T-cell (primary cell): ENCODE measurements at regions of chr12 and their contacts with region 1.

Region 1: DNA sequence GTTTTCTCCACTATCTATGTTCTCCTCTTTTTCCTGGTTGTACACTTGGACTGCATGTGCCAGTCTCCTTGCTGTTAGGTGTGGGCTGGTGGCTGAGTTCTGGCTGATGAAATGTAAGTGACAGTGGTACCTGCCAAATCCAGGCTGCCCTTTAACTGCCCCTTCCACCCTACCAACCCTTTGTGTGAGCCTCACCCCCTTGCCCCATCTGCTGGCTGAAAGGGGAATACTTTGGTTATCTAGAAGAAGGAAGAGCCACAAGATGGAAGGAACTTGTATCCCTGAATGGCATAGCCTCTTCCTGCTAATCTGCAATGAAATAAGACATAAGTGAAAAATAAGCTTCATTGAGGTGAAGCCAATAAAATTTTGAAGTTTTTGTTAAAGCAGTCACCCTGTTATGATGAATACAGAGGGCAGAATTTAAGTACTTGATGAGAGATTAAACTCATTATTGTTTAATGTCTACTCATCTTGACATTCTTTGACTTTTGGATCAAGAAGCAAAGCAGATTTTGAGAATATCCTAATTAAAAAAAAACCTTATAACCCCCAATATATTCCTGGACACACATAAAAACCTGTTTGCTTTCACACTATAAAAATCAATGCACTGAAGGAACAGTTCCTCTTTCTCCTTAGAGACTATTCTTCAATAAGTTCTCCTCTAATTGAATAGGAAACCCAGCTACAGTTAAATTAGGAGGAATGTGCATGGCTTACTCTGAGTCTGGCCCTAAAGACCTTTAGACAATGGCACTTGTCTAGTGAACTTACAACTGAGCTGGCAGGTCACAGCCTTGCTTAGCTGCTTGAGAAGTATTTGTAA is 262.6 kb upstream of the BTG1 start:
- DNase-seq: peak in 15 of 35 experiments; percentile 24 to 71 (median 34)
- ATAC-seq: no peak
- H3K4me3 ChIP-seq: no peak overlapping the region
- H3K4me3 Mint-ChIP-seq: peak overlapping the region in 1 of 3 donors; percentile 16
- H3K27ac ChIP-seq: no peak overlapping the region
- H3K27ac Mint-ChIP-seq: peak overlapping the region; percentile 24 to 72
- H3K4me1 ChIP-seq: peaks cover 17 to 27% of the 10 kb centered on the region in 2 experiments
- H3K4me1 Mint-ChIP-seq: peaks cover 64 to 69% (median 65%) of the 10 kb centered on the region in 3 donors
- H3K27me3 ChIP-seq: no peaks in the 10 kb centered on the region
- H3K27me3 Mint-ChIP-seq: no peaks in the 10 kb centered on the region

Region 2: DNA sequence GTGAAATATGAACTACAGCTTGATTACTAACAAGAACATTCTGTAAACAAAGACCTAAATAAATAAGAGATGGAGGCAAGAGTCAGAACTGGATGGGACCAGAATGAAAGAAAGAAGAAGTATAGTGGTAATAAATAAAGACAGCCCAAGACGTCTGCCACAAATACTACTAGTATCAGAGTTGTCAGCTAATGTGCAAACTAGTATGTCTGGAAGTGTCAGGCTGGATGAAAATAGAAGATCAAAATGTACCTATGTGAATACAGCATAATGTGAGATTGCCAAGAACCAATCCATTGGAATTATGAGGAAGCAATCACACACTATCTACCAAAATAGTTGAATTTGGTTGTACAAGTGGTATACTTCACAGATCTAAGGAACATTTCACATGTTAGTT is 615.7 kb before region 1 on chr12:
- CTCF ChIA-PET with region 1: no interaction called
- POLR2A ChIA-PET with region 1: interaction called in 1 of 2 experiments, 14 read pairs
- DNase-seq: no peak
- ATAC-seq: no peak
- H3K4me3 ChIP-seq: no peak overlapping the region
- H3K4me3 Mint-ChIP-seq: no peak overlapping the region
- H3K27ac ChIP-seq: no peak overlapping the region
- H3K27ac Mint-ChIP-seq: no peak overlapping the region
- H3K4me1 ChIP-seq: no peaks in the 10 kb centered on the region
- H3K4me1 Mint-ChIP-seq: peaks cover 3 to 17% (median 8%) of the 10 kb centered on the region in 3 donors
- H3K27me3 ChIP-seq: no peaks in the 10 kb centered on the region
- H3K27me3 Mint-ChIP-seq: no peaks in the 10 kb centered on the region

Region 3: GRCh38 chr12:92505254-92506231 is 97.3 kb after region 1 on chr12:
- CTCF ChIA-PET with region 1: no interaction called
- POLR2A ChIA-PET with region 1: interaction called in 1 of 2 experiments, 14 read pairs
- DNase-seq: peak; percentile 6 to 58 (median 37)
- ATAC-seq: peak; percentile 69 to 85 (median 76)
- H3K4me3 ChIP-seq: peak overlapping the region; percentile 6 to 7
- H3K4me3 Mint-ChIP-seq: peak overlapping the region; percentile 64 to 81 (median 80)
- H3K27ac ChIP-seq: peak overlapping the region; percentile 81
- H3K27ac Mint-ChIP-seq: peak overlapping the region; percentile 97 to 99
- H3K4me1 ChIP-seq: peaks cover 4 to 16% of the 10 kb centered on the region in 2 experiments
- H3K4me1 Mint-ChIP-seq: peaks cover 34 to 47% (median 35%) of the 10 kb centered on the region in 3 donors
- H3K27me3 ChIP-seq: no peaks in the 10 kb centered on the region
- H3K27me3 Mint-ChIP-seq: no peaks in the 10 kb centered on the region